Motor neuron (in vitro differentiated cells): ENCODE measurements at regions of chr7 and their contacts with region 1.

Region 1: GRCh38 chr7:34133983-34134782 is 228.8 kb downstream of the BMPER start:
- ATAC-seq: peak; percentile 42 to 92 (median 88)
- H3K4me3 ChIP-seq: no peak overlapping the region
- H3K27ac ChIP-seq: no peak overlapping the region
- H3K4me1 ChIP-seq: no peaks in the 10 kb centered on the region

Region 2: DNA sequence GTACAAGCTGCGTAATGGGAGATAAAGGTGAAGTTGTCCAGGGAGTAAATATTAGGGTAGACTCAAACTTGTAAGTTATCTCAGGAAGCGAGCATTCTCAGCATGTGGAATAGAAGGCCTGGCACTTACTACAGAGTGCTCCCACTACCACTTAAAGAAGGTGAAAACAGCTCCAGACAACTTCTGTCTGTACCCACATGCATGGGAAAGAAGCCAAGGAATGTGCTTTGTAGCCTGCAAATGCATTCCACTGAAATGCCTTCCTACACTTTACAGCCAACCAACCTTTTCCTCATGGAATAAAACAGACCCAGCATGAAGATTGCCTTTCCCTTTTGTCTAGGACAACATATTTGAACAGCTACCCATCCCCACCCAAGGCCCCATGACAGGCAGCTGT is 478.5 kb after region 1 on chr7:
- in situ Hi-C with region 1: loop called in 1 of 9 experiments (anchors 25 kb)
- ATAC-seq: peak in 2 of 8 experiments; percentile 38 to 54
- H3K4me3 ChIP-seq: no peak overlapping the region
- H3K27ac ChIP-seq: no peak overlapping the region
- H3K4me1 ChIP-seq: no peaks in the 10 kb centered on the region

Region 3: DNA sequence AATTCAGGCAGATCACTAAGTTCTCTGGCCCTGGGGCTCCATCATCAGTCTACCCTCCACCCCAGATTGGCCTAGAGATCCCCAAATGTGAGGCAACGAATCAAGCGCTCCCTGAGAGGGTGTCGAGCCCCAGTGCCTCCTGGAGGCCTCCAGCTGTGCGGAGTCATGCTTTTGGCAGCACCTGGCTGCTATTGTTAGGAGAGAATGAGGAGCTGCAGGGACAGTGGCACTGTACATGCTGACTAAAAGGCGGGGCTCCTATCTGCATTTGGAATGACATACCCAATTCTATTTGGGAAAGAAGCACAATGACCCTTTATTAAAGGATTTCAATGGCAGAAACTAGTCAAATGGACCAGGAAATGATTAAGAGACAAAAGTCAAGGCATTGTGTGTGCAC is 741.3 kb after region 1 on chr7:
- in situ Hi-C with region 1: no loop called
- ATAC-seq: peak in 2 of 8 experiments; percentile 12 to 28
- H3K4me3 ChIP-seq: no peak overlapping the region
- H3K27ac ChIP-seq: no peak overlapping the region
- H3K4me1 ChIP-seq: no peaks in the 10 kb centered on the region